ENCODE measurements at regions of chr1 and their contacts with region 1.

Region 1: DNA sequence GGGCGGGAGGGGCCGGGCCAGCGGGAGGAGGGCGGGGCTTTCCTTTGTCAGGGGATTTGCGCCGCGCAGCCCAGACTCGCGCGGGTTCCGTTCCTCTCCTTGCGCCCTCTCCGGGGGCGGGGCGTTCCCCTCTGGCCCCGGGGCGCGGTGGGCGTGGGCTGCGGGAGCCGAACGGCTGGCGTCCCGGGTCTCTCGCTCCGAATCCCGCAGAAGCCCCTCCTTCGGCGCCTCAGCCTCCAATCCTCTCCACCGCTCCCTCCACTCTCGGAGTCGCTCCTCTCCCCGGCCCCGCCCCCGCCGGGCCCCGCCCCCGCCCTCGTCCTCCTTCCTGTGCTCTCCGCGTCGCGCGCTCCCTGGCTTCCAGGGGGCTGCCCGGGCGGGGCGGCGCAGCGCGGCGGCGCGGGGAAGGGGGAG is 82.8 kb upstream of the BMP8A start:
- DNase-seq: peak; percentile 91 to 98
- H3K4me3 ChIP-seq: peak overlapping the region; percentile 76 to 84
- H3K27ac ChIP-seq: peak overlapping the region; percentile 96 to 97
- H3K4me1 ChIP-seq: peaks cover 10 to 56% of the 10 kb centered on the region in 2 donors
- H3K27me3 ChIP-seq: no peaks in the 10 kb centered on the region
- CTCF ChIP-seq: no peak

Region 2: GRCh38 chr1:38789498-38790169 is 619.0 kb before region 1 on chr1:
- intact Hi-C with region 1: no loop called
- DNase-seq: no peak
- H3K4me3 ChIP-seq: no peak overlapping the region
- H3K27ac ChIP-seq: no peak overlapping the region
- H3K4me1 ChIP-seq: no peaks in the 10 kb centered on the region
- H3K27me3 ChIP-seq: no peaks in the 10 kb centered on the region
- CTCF ChIP-seq: no peak

Region 3: DNA sequence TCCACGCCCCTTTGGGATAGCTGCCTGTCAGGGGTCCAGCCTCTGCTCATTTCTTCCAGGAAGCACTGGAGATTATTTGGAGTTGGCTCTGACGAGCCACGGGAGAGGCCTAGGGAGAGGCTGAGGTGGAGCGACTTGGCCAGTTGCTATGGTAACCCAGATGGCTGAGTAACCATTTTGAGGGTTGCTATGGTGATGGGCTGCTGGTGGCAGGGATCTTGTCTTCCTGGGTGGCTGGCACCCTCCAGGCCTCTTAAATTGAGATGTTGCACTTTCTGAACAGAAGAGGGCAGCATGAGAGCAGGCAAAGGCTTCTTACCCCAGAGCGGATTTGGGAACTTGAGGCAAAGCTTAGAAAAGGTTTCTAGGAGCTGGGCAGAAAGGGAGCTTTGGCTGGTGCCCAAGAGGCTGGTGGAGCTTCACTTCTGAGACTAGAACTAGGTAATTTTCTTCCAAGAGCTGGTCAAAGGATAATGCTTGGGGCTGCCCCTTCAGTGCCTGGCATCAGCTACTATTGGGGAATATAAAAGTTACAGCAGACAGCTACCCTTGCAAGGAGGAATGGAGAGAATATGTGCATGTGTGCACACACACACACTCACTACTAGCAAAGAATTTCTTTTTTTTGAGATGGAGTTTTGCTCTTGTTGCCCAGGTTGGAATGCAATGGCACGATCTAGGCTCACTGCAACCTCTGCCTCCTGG is 309.9 kb before region 1 on chr1:
- intact Hi-C with region 1: loop called (anchors 5 kb)
- DNase-seq: peak; percentile 49 to 90
- H3K4me3 ChIP-seq: no peak overlapping the region
- H3K27ac ChIP-seq: no peak overlapping the region
- H3K4me1 ChIP-seq: peaks cover 0 to 2% of the 10 kb centered on the region in 2 donors
- H3K27me3 ChIP-seq: no peaks in the 10 kb centered on the region
- CTCF ChIP-seq: peak; percentile 76 to 79 (median 78)

Region 4: GRCh38 chr1:39189592-39190041 is 219.0 kb before region 1 on chr1:
- intact Hi-C with region 1: loop called (anchors 5 kb)
- DNase-seq: no peak
- H3K4me3 ChIP-seq: no peak overlapping the region
- H3K27ac ChIP-seq: peak overlapping the region; percentile 59 to 90
- H3K4me1 ChIP-seq: peaks cover 15 to 36% of the 10 kb centered on the region in 2 donors
- H3K27me3 ChIP-seq: no peaks in the 10 kb centered on the region
- CTCF ChIP-seq: no peak

Region 5: GRCh38 chr1:39344394-39345154 is 64.1 kb before region 1 on chr1:
- intact Hi-C with region 1: no loop called
- DNase-seq: no peak
- H3K4me3 ChIP-seq: no peak overlapping the region
- H3K27ac ChIP-seq: no peak overlapping the region
- H3K4me1 ChIP-seq: no peaks in the 10 kb centered on the region
- H3K27me3 ChIP-seq: no peaks in the 10 kb centered on the region
- CTCF ChIP-seq: no peak

Region 6: GRCh38 chr1:39370602-39371001 is 38.0 kb before region 1 on chr1:
- intact Hi-C with region 1: loop called (anchors 1 kb)
- DNase-seq: peak in 1 of 2 donors; percentile 77
- H3K4me3 ChIP-seq: no peak overlapping the region
- H3K27ac ChIP-seq: peak overlapping the region; percentile 77 to 80
- H3K4me1 ChIP-seq: peaks cover 0 to 28% of the 10 kb centered on the region in 2 donors
- H3K27me3 ChIP-seq: no peaks in the 10 kb centered on the region
- CTCF ChIP-seq: peak in 1 of 3 experiments; percentile 12

Region 7: DNA sequence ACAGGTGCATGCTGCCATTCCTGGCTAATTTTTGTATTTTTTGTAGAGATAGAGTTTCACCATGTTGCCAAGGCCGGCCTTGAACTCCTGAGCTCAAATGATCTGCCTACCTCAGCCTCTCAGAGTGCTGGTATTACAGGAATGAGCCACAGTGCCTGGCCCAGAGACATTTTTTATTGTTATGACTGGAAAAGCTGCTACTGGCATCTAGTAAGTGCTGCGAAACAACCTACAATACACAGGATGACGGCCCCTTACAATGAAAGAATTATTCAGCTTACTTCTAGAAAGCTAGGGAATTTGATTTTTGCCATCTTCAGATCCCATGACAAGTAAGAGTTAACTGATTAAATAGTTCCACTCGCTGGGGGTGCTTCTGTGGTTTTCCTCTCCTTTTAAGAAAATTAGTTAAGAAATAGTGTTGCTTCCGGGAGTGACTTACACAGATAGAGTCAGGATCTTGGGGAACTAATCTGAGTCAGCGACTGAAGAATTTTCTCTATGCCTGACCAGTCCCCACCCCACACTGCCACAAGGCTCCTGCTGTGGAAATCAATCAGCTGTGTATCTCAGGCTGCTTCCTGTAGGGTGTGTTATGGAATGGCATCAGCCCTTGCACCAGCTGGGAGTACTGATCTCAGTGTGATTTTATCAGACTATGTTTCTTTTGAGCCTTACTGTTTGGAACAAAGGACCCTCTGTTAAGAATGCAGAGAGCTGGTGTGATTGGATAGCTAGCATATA is 10.2 kb before region 1 on chr1:
- intact Hi-C with region 1: loop called (anchors 1 kb)
- DNase-seq: peak; percentile 43 to 93
- H3K4me3 ChIP-seq: peak overlapping the region in 1 of 2 donors; percentile 16
- H3K27ac ChIP-seq: peak overlapping the region; percentile 81 to 85
- H3K4me1 ChIP-seq: peaks cover 28 to 52% of the 10 kb centered on the region in 2 donors
- H3K27me3 ChIP-seq: no peaks in the 10 kb centered on the region
- CTCF ChIP-seq: no peak

Measured in ascending aorta (tissue), 2 donors.